Posterior vena cava (tissue), 2 donors: ENCODE measurements at regions of chr20 and their contacts with region 1.

Region 1: GRCh38 chr20:42836339-42836738 is 353.4 kb downstream of the PTPRT start:
- DNase-seq: no peak

Region 2: GRCh38 chr20:42846784-42847490 is 10.6 kb after region 1 on chr20:
- intact Hi-C with region 1: loop called in 1 of 2 experiments (anchors 1 kb)
- DNase-seq: no peak